GM12878 (cell line): ENCODE measurements at regions of chr10 and their contacts with region 1.

Region 1: GRCh38 chr10:88270871-88271713 is 312.0 kb downstream of the RNLS start:
- DNase-seq: peak; percentile 97
- ATAC-seq: peak; percentile 95
- H3K4me3 ChIP-seq: no peak overlapping the region; the same call in 1 of the 2 replicates
- H3K27ac ChIP-seq: peak overlapping the region; percentile 96
- H3K4me1 ChIP-seq: peaks cover 48% of the 10 kb centered on the region
- H3K27me3 ChIP-seq: no peaks in the 10 kb centered on the region
- CTCF ChIP-seq: no peak
- EP300 ChIP-seq: peak; percentile 93 to 95
- POLR2A ChIP-seq: peak; percentile 7; the same call in 1 of the 2 replicates
- RAD21 ChIP-seq: peak; percentile 17; the same call in 1 of the 2 replicates

Region 2: DNA sequence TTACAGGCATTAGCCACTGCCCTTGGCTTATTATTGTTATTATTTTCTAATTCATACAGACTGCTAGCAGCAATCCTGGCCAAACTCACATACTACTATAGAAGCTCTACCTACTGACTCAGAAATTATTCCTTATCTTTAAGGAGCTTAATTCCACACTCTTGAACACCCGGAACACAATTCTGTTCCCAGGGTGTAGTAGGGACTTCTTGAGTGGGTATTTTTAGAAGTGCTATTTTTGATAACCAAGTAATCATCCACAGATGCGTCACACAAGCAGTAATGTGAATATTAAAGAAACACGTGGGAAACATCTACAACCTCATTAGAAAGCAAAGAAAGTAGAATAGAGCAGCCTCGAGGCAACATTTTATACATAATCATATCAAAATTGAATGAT is 258.5 kb before region 1 on chr10:
- CTCF ChIA-PET with region 1: no interaction called
- POLR2A ChIA-PET with region 1: no interaction called
- RAD21 ChIA-PET with region 1: no interaction called
- SMC1A ChIA-PET with region 1: no interaction called
- in situ Hi-C with region 1: no loop called
- intact Hi-C with region 1: no loop called
- DNase-seq: no peak
- ATAC-seq: no peak
- H3K4me3 ChIP-seq: no peak overlapping the region
- H3K27ac ChIP-seq: no peak overlapping the region
- H3K4me1 ChIP-seq: no peaks in the 10 kb centered on the region
- H3K27me3 ChIP-seq: no peaks in the 10 kb centered on the region
- CTCF ChIP-seq: no peak
- EP300 ChIP-seq: no peak
- POLR2A ChIP-seq: no peak
- RAD21 ChIP-seq: no peak

Region 3: GRCh38 chr10:88070080-88070880 is 200.8 kb before region 1 on chr10:
- CTCF ChIA-PET with region 1: interaction called, 3 read pairs
- POLR2A ChIA-PET with region 1: interaction called, 3 read pairs
- RAD21 ChIA-PET with region 1: no interaction called
- SMC1A ChIA-PET with region 1: interaction called, 3 read pairs
- in situ Hi-C with region 1: no loop called
- intact Hi-C with region 1: loop called (anchors 1 kb)
- DNase-seq: peak; percentile 92
- ATAC-seq: peak; percentile 74
- H3K4me3 ChIP-seq: 0 out of 2 replicates have a peak overlapping the region, but pooled peaks have one; percentile 18
- H3K27ac ChIP-seq: peak overlapping the region; percentile 73
- H3K4me1 ChIP-seq: peaks cover 69% of the 10 kb centered on the region
- H3K27me3 ChIP-seq: no peaks in the 10 kb centered on the region
- CTCF ChIP-seq: no peak
- EP300 ChIP-seq: peak; percentile 97 to 99; a peak in 3 of 4 replicates
- POLR2A ChIP-seq: no peak
- RAD21 ChIP-seq: peak; percentile 33; the same call in 1 of the 2 replicates

Region 4: GRCh38 chr10:88108115-88108610 is 162.9 kb before region 1 on chr10:
- CTCF ChIA-PET with region 1: interaction called, 4 read pairs
- POLR2A ChIA-PET with region 1: no interaction called
- RAD21 ChIA-PET with region 1: interaction called, 7 read pairs
- SMC1A ChIA-PET with region 1: interaction called, 6 read pairs
- in situ Hi-C with region 1: no loop called
- intact Hi-C with region 1: loop called (anchors 1 kb)
- DNase-seq: peak; percentile 94
- ATAC-seq: peak; percentile 56
- H3K4me3 ChIP-seq: no peak overlapping the region
- H3K27ac ChIP-seq: peak overlapping the region; percentile 92
- H3K4me1 ChIP-seq: peaks cover 92% of the 10 kb centered on the region
- H3K27me3 ChIP-seq: no peaks in the 10 kb centered on the region
- CTCF ChIP-seq: peak; percentile 39 to 46 (median 45); a peak in 5 of 6 replicates
- EP300 ChIP-seq: peak; percentile 69 to 76; a peak in 2 of 4 replicates
- POLR2A ChIP-seq: no peak
- RAD21 ChIP-seq: peak; percentile 41; the same call in 1 of the 2 replicates

Region 5: DNA sequence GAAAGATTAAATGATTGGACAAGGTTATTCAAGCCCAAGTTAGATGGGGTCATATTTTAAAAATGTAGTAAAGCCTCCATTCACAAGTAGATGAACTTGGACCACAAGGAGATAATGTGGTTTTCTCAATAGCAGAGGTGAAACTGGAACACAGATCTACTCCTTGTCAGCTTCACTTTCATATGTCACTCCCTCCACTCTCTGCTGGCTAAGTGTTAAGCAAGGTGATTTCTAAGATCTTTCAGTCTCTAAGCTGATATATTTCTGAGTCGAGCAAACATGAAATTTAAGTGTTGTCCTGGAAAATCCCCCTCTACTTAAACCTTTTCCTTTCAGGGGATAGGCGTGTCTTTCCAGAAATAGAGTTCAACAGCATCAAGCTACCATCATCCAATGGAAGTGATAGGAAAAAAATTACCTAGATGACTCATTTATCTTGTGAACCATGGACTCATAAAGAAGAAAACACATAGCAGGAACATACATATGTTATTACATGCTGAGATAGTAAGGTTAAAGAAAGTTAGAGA is 132.7 kb before region 1 on chr10:
- CTCF ChIA-PET with region 1: no interaction called
- POLR2A ChIA-PET with region 1: no interaction called
- RAD21 ChIA-PET with region 1: interaction called, 9 read pairs
- SMC1A ChIA-PET with region 1: no interaction called
- in situ Hi-C with region 1: no loop called
- intact Hi-C with region 1: loop called (anchors 1 kb)
- DNase-seq: peak; percentile 74
- ATAC-seq: peak; percentile 97
- H3K4me3 ChIP-seq: no peak overlapping the region
- H3K27ac ChIP-seq: peak overlapping the region; percentile 16
- H3K4me1 ChIP-seq: peaks cover 16% of the 10 kb centered on the region; the same call in 1 of the 2 replicates
- H3K27me3 ChIP-seq: no peaks in the 10 kb centered on the region
- CTCF ChIP-seq: no peak
- EP300 ChIP-seq: peak in 1 of 2 experiments; percentile 72; a peak in 3 of 4 replicates
- POLR2A ChIP-seq: no peak
- RAD21 ChIP-seq: no peak

Region 6: DNA sequence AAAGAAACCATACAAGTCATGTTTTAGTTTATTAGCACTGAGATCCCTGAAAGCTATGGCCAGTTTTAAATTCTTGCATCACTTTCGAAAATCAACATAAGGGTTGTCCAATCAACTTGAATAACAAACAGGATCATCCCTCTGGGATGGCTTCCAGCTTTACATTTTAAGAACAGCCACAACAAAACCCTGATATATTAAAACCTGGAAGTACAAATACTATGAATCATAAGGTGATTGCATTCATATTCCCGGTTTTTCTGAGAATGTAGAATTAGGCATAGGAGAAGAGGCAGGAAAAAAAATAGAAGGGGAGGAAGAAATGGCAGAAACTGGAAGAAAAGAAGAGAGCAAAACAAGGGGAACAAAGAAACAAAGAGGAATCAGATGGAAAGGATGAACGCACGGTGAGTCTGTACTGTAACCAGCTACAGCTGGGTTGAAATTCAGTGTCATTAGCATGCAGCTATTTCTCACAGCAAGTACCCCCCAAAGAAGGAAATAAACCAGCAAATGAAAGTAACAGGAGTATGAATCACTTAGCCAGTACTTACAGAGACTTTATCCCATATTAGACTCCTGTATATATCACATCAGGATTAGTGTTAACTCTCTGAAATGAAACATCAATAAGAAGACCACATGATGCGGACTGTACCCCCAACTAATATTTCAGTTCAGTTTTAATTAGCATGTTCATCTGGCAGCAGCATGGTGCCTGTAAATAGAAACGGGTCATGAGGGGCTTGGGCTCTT is 10.7 kb after region 1 on chr10:
- CTCF ChIA-PET with region 1: interaction called, 8 read pairs
- POLR2A ChIA-PET with region 1: interaction called, 4 read pairs
- RAD21 ChIA-PET with region 1: interaction called, 4 read pairs
- SMC1A ChIA-PET with region 1: interaction called, 12 read pairs
- in situ Hi-C with region 1: no loop called
- intact Hi-C with region 1: no loop called
- DNase-seq: no peak
- ATAC-seq: 0 out of 3 replicates have a peak, but pooled peaks have one; percentile 21
- H3K4me3 ChIP-seq: no peak overlapping the region
- H3K27ac ChIP-seq: no peak overlapping the region
- H3K4me1 ChIP-seq: no peaks in the 10 kb centered on the region
- H3K27me3 ChIP-seq: no peaks in the 10 kb centered on the region
- CTCF ChIP-seq: no peak
- EP300 ChIP-seq: no peak
- POLR2A ChIP-seq: no peak
- RAD21 ChIP-seq: no peak